ENCODE measurements at regions of chr12 and their contacts with region 1.

Region 1: DNA sequence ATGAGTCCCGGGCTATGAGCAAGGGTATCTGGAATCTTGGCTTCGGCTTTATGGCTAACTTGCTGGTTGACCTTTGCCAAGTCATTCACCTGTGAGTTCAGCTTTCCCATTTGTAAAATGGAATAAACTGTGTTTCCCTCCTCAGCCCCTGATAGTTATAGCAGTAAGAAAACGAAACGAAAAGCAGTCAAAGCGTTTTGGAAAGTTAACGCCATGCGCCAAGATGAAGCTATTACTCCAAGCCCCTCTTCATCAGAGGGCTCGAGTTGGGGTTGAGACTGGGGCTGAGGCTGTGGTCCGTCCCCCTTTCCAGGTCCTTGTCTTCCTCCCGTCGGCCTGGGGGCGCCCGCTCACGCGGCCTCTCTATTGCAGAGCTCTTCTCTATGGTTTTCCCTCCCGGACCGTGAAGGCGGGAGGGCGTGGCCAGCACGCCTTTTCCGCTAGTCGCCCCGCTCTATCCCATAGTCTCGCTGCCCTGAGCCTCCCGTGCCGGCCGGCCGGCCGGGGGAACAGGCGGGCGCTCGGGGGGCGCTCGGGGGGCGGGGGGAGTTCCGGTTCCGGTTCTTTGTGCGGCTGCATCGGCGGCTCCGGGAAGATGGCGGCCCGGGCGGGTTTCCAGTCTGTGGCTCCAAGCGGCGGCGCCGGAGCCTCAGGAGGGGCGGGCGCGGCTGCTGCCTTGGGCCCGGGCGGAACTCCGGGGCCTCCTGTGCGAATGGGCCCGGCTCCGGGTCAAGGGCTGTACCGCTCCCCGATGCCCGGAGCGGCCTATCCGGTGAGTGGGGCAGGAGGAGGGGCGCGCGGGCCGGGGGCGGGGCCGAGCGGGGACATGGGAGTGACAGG is at the start of gene SMARCD1:
- DNase-seq: peak; percentile 66 to 91 (median 80)
- ATAC-seq: peak; percentile 89 to 91
- H3K4me3 Mint-ChIP-seq: peak within 1 kb of the TSS; percentile 90 to 99 (median 94)
- H3K27ac Mint-ChIP-seq: peak within 1 kb of the TSS; percentile 95 to 99 (median 97)
- H3K4me1 Mint-ChIP-seq: peaks cover 21 to 43% (median 38%) of the 10 kb centered on the region in 4 donors
- H3K27me3 Mint-ChIP-seq: no peaks in the 10 kb centered on the region
- polyA plus RNA-seq, gene SMARCD1: 9.7 to 16.8 (median 16.0) TPM

Region 2: DNA sequence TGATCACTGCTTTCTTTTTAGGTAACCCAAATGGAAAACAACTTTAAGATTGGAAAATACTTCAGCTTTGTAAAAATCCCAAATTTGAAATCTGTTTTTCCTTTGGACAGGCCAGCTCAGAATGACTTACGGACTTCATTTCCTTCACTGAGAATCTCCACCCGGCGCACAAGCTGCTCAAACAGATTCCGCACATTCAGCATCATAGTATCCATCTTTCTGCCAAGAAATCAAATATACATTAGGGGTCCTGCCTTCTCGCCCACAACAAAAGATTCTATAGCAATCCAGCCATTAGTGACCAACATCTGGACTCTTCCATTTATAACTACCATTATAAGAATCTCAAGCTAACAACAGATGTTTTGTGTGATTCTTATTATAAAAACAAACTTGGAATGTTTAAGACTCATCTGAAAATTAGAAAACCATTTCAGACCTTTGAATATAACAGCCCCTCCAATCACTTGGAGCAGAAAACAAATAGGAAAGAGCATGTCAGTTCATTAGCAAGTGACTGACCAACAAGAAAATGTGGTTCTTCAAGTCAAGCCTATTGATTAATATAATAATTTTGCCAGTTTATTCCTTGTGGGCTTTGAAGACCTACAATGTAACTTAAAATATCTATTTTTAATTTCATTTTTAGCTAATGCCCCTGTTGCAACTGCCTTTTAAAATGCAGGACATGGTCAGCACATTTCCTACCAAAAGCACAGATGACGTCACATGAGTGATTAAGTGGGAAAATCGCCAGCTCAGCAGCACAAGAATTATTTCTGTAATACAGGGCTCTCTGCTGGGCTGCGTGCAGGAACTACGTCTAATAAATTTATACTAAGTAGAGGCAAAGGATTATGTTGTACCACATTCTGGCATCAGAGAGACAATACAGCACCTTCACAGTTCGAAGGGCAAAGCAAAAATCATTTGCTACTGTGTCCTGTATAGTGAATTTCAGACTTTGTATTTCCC is 68.2 kb before region 1 on chr12:
- POLR2A ChIA-PET with region 1: no interaction called
- DNase-seq: no peak
- ATAC-seq: no peak
- H3K4me3 Mint-ChIP-seq: no peak overlapping the region
- H3K27ac Mint-ChIP-seq: no peak overlapping the region
- H3K4me1 Mint-ChIP-seq: peaks cover 0 to 4% (median under 1%) of the 10 kb centered on the region in 4 donors
- H3K27me3 Mint-ChIP-seq: no peaks in the 10 kb centered on the region

Region 3: DNA sequence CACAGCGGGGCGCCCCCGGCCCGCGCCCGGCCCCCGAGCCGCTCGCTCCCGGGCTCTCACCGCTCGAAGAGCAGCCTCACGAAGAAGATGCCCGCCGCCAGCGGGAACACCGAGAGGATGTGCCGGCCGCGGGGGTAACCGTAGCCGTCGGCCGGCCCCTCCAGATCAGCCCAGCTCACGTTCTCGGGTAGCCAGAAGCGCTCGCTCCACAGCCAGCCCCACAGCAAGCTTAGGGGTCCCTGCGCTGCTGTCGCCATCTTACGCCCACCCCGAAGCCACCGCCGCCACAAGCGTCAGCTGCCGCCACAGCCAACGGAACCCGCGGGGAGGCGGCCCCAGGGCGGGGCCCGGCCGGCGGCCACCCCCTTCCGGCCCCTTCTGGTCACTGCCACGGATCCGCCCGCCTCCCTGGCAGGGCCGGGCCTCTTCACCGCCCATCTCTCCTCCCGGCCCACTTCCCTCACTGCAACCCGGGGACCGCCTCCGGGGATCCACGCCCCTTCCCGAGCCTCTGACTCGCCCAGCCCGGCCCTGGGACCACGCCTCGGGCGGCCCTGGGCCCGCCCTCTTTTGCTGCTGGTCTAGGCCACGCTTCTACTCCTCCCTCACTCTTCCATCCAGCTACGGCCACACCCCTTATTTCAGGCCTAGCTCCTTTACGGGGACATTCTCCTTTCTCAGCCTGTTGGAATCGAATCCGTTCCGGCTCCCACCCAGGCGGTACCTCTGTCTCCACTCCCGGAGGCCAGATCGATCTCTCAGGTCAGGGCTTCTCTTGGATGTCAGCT is 82.2 kb after region 1 on chr12 and contains the start of gene CERS5:
- POLR2A ChIA-PET with region 1: interaction called, 24 read pairs
- DNase-seq: peak; percentile 90 to 97 (median 96)
- ATAC-seq: peak; percentile 94 to 95
- H3K4me3 Mint-ChIP-seq: peak within 1 kb of the TSS; percentile 88 to 97 (median 93)
- H3K27ac Mint-ChIP-seq: peak within 1 kb of the TSS; percentile 84 to 98 (median 97)
- H3K4me1 Mint-ChIP-seq: peaks cover 8 to 41% (median 36%) of the 10 kb centered on the region in 4 donors
- H3K27me3 Mint-ChIP-seq: no peaks in the 10 kb centered on the region
- polyA plus RNA-seq, gene CERS5: 31.0 to 45.0 (median 33.6) TPM

Region 4: GRCh38 chr12:50261654-50262053 is 176.7 kb after region 1 on chr12:
- POLR2A ChIA-PET with region 1: no interaction called
- DNase-seq: no peak
- ATAC-seq: no peak
- H3K4me3 Mint-ChIP-seq: no peak overlapping the region
- H3K27ac Mint-ChIP-seq: no peak overlapping the region
- H3K4me1 Mint-ChIP-seq: peaks cover 0 to 2% (median 0%) of the 10 kb centered on the region in 4 donors
- H3K27me3 Mint-ChIP-seq: no peaks in the 10 kb centered on the region

Region 5: DNA sequence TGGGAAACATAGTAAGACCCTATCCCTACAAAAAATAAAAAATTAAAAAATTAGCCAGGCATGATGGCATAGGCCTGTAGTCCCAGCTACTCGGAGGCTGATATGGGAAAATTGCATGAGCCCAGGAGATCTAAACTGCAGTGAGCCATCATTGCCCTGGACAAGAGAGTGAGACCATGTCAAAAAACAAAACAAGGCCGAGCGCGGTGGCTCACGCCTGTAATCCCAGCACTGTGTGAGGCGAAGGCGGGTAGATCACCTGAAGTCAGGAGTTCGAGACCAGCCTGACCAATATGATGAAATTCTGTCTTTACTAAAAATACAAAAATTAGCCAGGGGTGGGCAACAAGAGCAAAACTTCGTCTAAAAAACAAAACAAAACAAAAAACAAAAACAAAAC is 259.8 kb after region 1 on chr12:
- POLR2A ChIA-PET with region 1: interaction called, 10 read pairs
- DNase-seq: no peak
- ATAC-seq: no peak
- H3K4me3 Mint-ChIP-seq: no peak overlapping the region
- H3K27ac Mint-ChIP-seq: no peak overlapping the region
- H3K4me1 Mint-ChIP-seq: peaks cover 0 to 2% (median 0%) of the 10 kb centered on the region in 4 donors
- H3K27me3 Mint-ChIP-seq: peaks cover 0 to 3% (median 0%) of the 10 kb centered on the region in 5 donors